ENCODE measurements at regions of chr18 and their contacts with region 1.

Region 1: DNA sequence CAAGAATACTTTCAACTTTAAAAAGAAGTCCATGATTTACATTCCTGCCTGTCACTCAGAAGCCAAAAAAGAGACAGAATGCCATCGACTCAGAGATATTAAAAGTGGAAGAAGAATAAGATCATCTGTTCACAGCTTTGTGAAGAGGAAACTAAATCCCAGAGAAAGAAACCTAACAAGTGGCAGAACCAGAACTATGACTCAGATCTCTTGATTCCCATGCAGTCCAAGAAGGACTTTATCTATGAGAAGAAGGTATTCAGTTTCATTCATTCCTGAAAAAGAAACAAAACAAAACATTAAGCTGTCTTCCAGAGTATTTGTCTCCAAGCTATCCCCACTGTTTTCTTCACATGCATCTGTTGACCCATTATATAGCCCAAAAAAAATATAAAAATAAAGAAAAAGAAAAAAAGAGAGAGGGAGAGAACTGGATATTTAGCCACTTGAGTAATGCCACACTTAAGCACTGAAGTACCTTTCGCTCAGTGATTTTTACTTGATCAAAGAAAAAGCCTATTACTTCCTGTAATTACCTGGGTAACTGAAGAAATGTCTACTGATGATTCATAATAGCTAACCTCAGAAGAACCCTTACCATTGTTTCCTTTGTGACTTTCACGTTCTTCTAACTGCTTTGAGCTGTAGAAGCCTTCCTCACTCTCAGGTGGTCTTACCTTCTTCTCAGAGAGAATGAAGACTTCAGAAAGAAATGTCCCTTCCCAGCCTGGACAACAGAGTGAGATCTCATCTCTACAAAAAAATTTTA is 17.7 kb upstream of the AKAIN1 start:
- DNase-seq: no peak
- ATAC-seq: no peak
- H3K4me3 ChIP-seq: no peak overlapping the region
- H3K27ac ChIP-seq: no peak overlapping the region
- H3K4me1 ChIP-seq: no peaks in the 10 kb centered on the region
- H3K27me3 ChIP-seq: no peaks in the 10 kb centered on the region

Region 2: DNA sequence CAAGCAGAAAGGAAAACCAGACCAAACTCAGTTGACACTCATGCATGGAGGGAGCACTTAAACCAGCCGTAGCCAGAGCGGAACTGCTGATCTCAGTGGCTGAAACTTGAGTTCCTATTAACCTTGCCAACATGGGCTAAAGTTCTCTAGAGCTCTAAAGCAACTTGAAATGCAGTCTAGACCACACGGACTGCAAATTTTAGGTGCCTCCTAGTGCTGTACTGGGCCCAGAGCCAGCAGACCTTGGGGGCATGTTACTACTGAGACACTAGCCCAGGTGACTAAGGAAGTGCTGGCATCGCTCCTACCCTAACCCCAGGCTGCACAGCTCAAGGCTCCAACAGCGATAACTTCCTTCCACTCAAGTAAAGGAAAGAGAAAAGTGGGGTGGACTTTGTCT is 254.2 kb before region 1 on chr18:
- intact Hi-C with region 1: no loop called
- DNase-seq: no peak
- ATAC-seq: no peak
- H3K4me3 ChIP-seq: no peak overlapping the region
- H3K27ac ChIP-seq: no peak overlapping the region
- H3K4me1 ChIP-seq: no peaks in the 10 kb centered on the region
- H3K27me3 ChIP-seq: no peaks in the 10 kb centered on the region

Region 3: DNA sequence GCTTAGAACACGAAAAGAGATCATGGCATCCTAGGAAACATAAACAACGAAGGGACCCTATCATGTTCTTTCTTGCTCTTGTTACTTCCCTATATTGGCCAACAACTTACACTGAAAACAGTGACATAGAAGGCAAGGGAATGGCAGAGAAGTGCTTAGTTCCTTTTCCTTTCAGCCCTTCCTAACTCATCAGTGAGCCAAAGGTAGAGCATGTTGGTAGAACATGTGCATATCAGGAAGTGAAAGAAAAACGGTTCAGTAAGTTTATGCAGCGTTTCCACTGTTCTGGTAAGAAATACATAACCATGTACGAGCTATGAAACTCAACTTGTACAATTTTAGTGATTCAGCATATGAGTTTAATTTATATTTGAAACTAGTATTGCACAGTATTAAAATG is 39.4 kb before region 1 on chr18:
- intact Hi-C with region 1: no loop called
- DNase-seq: no peak
- ATAC-seq: no peak
- H3K4me3 ChIP-seq: no peak overlapping the region
- H3K27ac ChIP-seq: no peak overlapping the region
- H3K4me1 ChIP-seq: no peaks in the 10 kb centered on the region
- H3K27me3 ChIP-seq: no peaks in the 10 kb centered on the region

Region 4: DNA sequence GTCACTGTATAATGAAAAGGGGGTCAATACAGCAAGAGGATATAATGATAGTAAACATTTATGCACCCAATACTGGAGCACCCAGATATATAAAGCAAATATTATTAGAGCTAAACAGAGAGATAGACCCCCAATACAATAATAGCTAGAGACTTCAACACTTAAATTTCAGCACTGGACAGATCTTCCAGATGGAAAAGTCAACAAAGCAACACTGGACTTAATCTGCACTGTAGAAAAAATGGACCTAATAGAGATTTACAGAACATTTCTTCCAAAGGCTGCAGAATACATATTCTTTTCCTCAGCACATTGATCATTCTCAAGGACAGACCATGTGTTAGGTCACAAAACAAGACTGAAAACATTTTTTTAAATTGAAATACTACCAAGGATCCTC is 54.1 kb after region 1 on chr18:
- intact Hi-C with region 1: loop called in 1 of 4 experiments (anchors 5 kb)
- DNase-seq: no peak
- ATAC-seq: no peak
- H3K4me3 ChIP-seq: no peak overlapping the region
- H3K27ac ChIP-seq: no peak overlapping the region
- H3K4me1 ChIP-seq: no peaks in the 10 kb centered on the region
- H3K27me3 ChIP-seq: no peaks in the 10 kb centered on the region

Measured in right cardiac atrium (tissue), 5 donors.